ENCODE measurements at regions of chr17 and their contacts with region 1.

Region 1: DNA sequence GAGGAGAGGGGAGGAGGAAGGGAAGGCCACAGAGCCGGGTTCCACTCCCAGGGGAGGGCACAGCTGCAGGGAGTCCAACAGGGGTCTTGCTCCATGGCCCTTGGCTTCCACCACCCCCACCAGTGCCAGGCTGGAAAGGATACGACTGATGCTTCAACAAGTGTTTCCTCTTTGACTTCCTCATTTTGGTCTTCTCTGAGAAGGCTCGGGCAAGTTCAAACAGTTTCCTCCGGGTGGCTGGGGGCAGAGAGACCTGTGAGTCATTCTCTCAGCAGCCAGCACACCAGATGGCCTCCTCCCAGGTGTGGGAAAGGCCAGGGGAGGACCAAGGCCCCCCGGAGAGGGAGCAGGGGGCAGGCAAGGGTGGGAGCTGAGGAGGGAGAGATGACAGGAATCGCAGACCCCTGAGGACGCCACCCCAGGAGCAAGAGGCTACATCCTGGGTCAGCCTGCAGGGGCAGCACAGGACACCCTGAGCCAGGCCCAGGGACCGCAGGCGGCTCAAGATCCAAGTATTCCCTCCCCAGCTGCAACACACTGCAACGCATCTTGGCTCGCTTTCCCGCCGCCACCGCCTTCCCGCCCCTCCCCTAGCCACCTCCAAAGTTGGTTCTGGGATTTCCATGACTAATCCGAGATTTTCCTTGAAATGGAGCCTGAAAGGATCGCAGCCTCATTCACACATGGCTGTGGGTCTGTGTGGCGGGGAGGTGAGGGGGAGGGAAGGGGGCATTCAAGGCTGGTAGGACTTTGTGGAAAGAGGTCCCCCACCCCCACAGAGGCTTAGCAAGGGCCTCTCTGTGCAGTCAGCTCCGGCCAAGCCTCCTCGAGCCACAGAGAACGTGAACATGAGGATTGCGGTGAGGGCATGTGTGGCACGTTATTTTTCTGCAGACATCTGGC is 18.4 kb upstream of the MRPS23 start:
- DNase-seq: peak; percentile 78 to 92 (median 88)
- ATAC-seq: peak; percentile 90 to 93 (median 92)
- H3K4me3 ChIP-seq: no peak overlapping the region
- H3K27ac ChIP-seq: peak overlapping the region; percentile 62 to 87 (median 80)
- H3K4me1 ChIP-seq: peaks cover 5 to 22% (median 19%) of the 10 kb centered on the region in 3 donors
- H3K27me3 ChIP-seq: no peaks in the 10 kb centered on the region
- CTCF ChIP-seq: peak in 1 of 4 donors; percentile 18

Region 2: GRCh38 chr17:57685505-57686132 is 182.6 kb before region 1 on chr17:
- intact Hi-C with region 1: no loop called
- DNase-seq: no peak
- ATAC-seq: no peak
- H3K4me3 ChIP-seq: no peak overlapping the region
- H3K27ac ChIP-seq: no peak overlapping the region
- H3K4me1 ChIP-seq: no peaks in the 10 kb centered on the region
- H3K27me3 ChIP-seq: no peaks in the 10 kb centered on the region
- CTCF ChIP-seq: no peak

Region 3: GRCh38 chr17:58082870-58083490 is 214.7 kb after region 1 on chr17 and contains the start of gene DYNLL2:
- intact Hi-C with region 1: loop called in 1 of 3 experiments (anchors 10 kb)
- DNase-seq: peak; percentile 92 to 97 (median 94)
- ATAC-seq: peak; percentile 88 to 93 (median 89)
- H3K4me3 ChIP-seq: peak within 1 kb of the TSS; percentile 95 to 98 (median 97)
- H3K27ac ChIP-seq: peak within 1 kb of the TSS; percentile 83 to 90 (median 86)
- H3K4me1 ChIP-seq: peaks cover 6 to 23% (median 16%) of the 10 kb centered on the region in 3 donors
- H3K27me3 ChIP-seq: no peaks in the 10 kb centered on the region
- CTCF ChIP-seq: no peak
- total RNA-seq, gene DYNLL2: 10.7 to 17.9 (median 12.5) TPM

Measured in pancreas (tissue), 10 donors.